ENCODE measurements at regions of chr2 and their contacts with region 1.

Region 1: GRCh38 chr2:168118733-168119514 is 128.5 kb downstream of the STK39 start:
- DNase-seq: peak in 1 of 2 experiments; percentile 52
- H3K4me3 ChIP-seq: no peak overlapping the region
- H3K27ac ChIP-seq: no peak overlapping the region
- H3K4me1 ChIP-seq: peaks cover 0 to 13% (median 7%) of the 10 kb centered on the region in 4 experiments; a peak in 4 of 7 replicates
- H3K27me3 ChIP-seq: no peaks in the 10 kb centered on the region
- CTCF ChIP-seq: peak in 2 of 3 experiments; percentile 58 to 60; a peak in 3 of 4 replicates
- EP300 ChIP-seq: no peak
- POLR2A ChIP-seq: no peak
- RAD21 ChIP-seq: peak; percentile 85 to 89

Region 2: GRCh38 chr2:167875529-167875928 is 243.4 kb before region 1 on chr2:
- CTCF ChIA-PET with region 1: interaction called, 11 read pairs
- POLR2A ChIA-PET with region 1: no interaction called
- DNase-seq: no peak
- H3K4me3 ChIP-seq: no peak overlapping the region
- H3K27ac ChIP-seq: no peak overlapping the region
- H3K4me1 ChIP-seq: no peaks in the 10 kb centered on the region
- H3K27me3 ChIP-seq: no peaks in the 10 kb centered on the region
- CTCF ChIP-seq: no peak
- EP300 ChIP-seq: no peak
- POLR2A ChIP-seq: no peak
- RAD21 ChIP-seq: no peak

Region 3: DNA sequence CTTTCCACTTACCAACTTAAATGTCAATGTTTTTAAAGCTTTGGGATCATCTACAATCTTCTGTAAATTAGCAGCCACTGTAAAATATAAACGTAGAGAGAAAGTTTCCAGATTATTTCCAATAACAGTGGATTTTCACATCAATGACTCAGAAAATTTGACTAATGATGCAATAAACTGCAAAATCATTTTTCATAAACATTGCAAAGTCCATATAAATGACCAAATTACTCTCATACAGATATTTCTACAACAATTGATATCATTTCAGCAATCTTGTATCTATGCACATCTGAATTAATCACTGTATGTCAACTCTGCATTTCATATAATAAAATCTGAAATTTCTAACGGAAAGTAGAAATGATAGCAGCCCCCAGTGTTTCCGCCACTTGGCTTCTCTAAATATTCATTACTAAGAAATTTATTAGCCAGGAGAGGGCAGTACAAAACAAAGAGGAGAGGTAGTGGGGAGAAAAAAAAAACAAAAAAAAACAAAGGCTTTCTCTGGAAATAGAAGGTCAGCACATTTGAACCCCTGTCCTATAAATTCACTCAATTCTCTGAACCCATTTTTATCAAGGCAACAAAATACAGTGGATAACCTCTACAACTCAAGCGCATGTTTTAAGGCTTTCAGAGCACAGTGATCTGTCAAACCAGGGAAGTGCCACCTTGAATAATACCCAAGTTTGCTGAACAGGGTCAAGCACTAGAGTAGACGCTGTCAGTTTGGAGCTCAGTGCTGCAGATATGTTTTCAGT is 154.1 kb before region 1 on chr2:
- CTCF ChIA-PET with region 1: interaction called, 59 read pairs
- POLR2A ChIA-PET with region 1: no interaction called
- DNase-seq: no peak
- H3K4me3 ChIP-seq: no peak overlapping the region
- H3K27ac ChIP-seq: no peak overlapping the region
- H3K4me1 ChIP-seq: no peaks in the 10 kb centered on the region; a peak in 2 of 7 replicates
- H3K27me3 ChIP-seq: no peaks in the 10 kb centered on the region
- CTCF ChIP-seq: peak in 1 of 3 experiments; percentile 40; a peak in 1 of 4 replicates
- EP300 ChIP-seq: no peak
- POLR2A ChIP-seq: no peak
- RAD21 ChIP-seq: peak; percentile 59 to 63

Region 4: GRCh38 chr2:168054653-168055052 is 64.3 kb before region 1 on chr2:
- CTCF ChIA-PET with region 1: interaction called, 15 read pairs
- POLR2A ChIA-PET with region 1: no interaction called
- DNase-seq: no peak
- H3K4me3 ChIP-seq: no peak overlapping the region
- H3K27ac ChIP-seq: no peak overlapping the region
- H3K4me1 ChIP-seq: peaks cover 0 to 5% (median under 1%) of the 10 kb centered on the region in 4 experiments; a peak in 4 of 7 replicates
- H3K27me3 ChIP-seq: no peaks in the 10 kb centered on the region
- CTCF ChIP-seq: no peak
- EP300 ChIP-seq: no peak
- POLR2A ChIP-seq: no peak
- RAD21 ChIP-seq: no peak

Region 5: GRCh38 chr2:168084327-168084726 is 34.6 kb before region 1 on chr2:
- CTCF ChIA-PET with region 1: interaction called, 32 read pairs
- POLR2A ChIA-PET with region 1: interaction called, 3 read pairs
- DNase-seq: no peak
- H3K4me3 ChIP-seq: no peak overlapping the region
- H3K27ac ChIP-seq: no peak overlapping the region
- H3K4me1 ChIP-seq: no peaks in the 10 kb centered on the region
- H3K27me3 ChIP-seq: no peaks in the 10 kb centered on the region
- CTCF ChIP-seq: no peak
- EP300 ChIP-seq: no peak
- POLR2A ChIP-seq: no peak
- RAD21 ChIP-seq: peak; percentile 13 to 31; a peak in 2 of 4 replicates

Region 6: GRCh38 chr2:168138374-168138773 is 19.4 kb after region 1 on chr2:
- CTCF ChIA-PET with region 1: interaction called, 76 read pairs
- POLR2A ChIA-PET with region 1: no interaction called
- DNase-seq: no peak
- H3K4me3 ChIP-seq: no peak overlapping the region
- H3K27ac ChIP-seq: no peak overlapping the region
- H3K4me1 ChIP-seq: peaks cover 0 to 5% (median 3%) of the 10 kb centered on the region in 4 experiments; a peak in 4 of 7 replicates
- H3K27me3 ChIP-seq: no peaks in the 10 kb centered on the region
- CTCF ChIP-seq: no peak
- EP300 ChIP-seq: no peak
- POLR2A ChIP-seq: no peak
- RAD21 ChIP-seq: no peak